A549 (cell line): ENCODE measurements at regions of chr17 and their contacts with region 1.

Region 1: GRCh38 chr17:76422406-76422805 is 30.5 kb downstream of the UBE2O start:
- DNase-seq: no peak
- ATAC-seq: no peak
- H3K4me3 ChIP-seq: no peak overlapping the region
- H3K27ac ChIP-seq: no peak overlapping the region
- H3K4me1 ChIP-seq: peaks cover 3% of the 10 kb centered on the region
- CTCF ChIP-seq: no peak
- EP300 ChIP-seq: no peak
- POLR2A ChIP-seq: no peak
- RAD21 ChIP-seq: no peak

Region 2: GRCh38 chr17:76437467-76438402 is 15.3 kb after region 1 on chr17:
- CTCF ChIA-PET with region 1: interaction called, 1,107 read pairs
- POLR2A ChIA-PET with region 1: interaction called, 3 read pairs
- DNase-seq: no peak
- ATAC-seq: no peak
- H3K4me3 ChIP-seq: no peak overlapping the region
- H3K27ac ChIP-seq: 0 out of 6 replicates have a peak overlapping the region, but pooled peaks of 1 of the 2 experiments have one; percentile 12
- H3K4me1 ChIP-seq: peaks cover 30% of the 10 kb centered on the region
- CTCF ChIP-seq: no peak
- EP300 ChIP-seq: no peak
- POLR2A ChIP-seq: no peak
- RAD21 ChIP-seq: no peak